Esophagus squamous epithelium (tissue), 5 donors: ENCODE measurements at regions of chr1 and their contacts with region 1.

Region 1: DNA sequence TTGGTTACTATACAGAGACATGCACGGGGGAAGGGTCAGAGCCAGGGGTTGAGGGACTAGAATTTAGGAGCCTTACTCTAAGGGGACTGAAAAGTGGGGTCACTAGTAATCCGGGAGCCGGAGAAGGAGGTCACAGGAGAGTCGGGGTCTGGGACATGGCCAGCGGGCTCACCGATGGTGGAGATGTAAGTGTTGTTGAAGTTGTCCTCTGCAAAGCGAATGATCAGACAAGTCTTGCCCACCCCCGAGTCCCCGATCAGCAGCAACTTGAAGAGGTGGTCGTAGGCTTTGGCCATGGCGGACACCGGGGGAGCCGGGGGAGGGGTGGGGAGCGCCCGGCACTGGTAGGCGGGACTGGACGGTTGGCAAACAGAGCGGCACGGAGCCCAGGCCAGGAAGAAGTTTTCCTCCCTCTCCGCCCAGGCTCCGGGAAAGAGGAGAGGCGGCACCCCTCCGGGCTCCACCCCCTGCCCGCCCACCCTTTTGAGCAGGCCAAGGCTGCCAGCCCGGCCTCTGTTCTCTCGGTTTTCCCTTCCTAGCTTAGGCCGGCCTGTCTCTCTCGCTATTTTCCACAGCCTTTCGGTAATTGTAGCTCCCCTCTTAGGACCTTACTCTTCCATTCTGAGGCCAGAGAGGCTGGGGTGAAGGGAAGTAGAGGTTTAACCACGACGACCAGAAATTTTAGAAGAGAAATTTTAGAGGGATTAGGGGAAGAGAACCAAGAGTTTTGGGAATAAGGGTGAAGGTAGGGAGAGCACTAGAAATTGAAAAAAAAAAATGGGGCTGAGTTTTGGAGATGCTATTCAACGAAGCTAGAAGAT is at the start of gene RAB13:
- DNase-seq: no peak
- H3K4me3 ChIP-seq: peak within 1 kb of the TSS; percentile 58 to 75 (median 68)
- H3K27ac ChIP-seq: peak within 1 kb of the TSS; percentile 83 to 97 (median 86)
- H3K4me1 ChIP-seq: peaks cover 8 to 40% (median 23%) of the 10 kb centered on the region in 3 donors
- H3K27me3 ChIP-seq: no peaks in the 10 kb centered on the region
- CTCF ChIP-seq: no peak
- POLR2A ChIP-seq: peak in 2 of 4 donors; percentile 25 to 56
- total RNA-seq, gene RAB13: 24.1 to 45.8 (median 35.5) TPM

Region 2: GRCh38 chr1:153670859-153671627 is 315.1 kb before region 1 on chr1 and contains the start of gene ILF2:
- intact Hi-C with region 1: loop called (anchors 10 kb)
- DNase-seq: peak; percentile 87
- H3K4me3 ChIP-seq: peak within 1 kb of the TSS; percentile 65 to 87 (median 78)
- H3K27ac ChIP-seq: peak within 1 kb of the TSS; percentile 86 to 93 (median 92)
- H3K4me1 ChIP-seq: peaks cover 9 to 37% (median 12%) of the 10 kb centered on the region in 3 donors
- H3K27me3 ChIP-seq: no peaks in the 10 kb centered on the region
- CTCF ChIP-seq: peak in 1 of 6 experiments; percentile 24
- POLR2A ChIP-seq: peak in 3 of 4 donors; percentile 91 to 99 (median 94)
- total RNA-seq, gene ILF2: 78.0 to 166 (median 130) TPM

Region 3: DNA sequence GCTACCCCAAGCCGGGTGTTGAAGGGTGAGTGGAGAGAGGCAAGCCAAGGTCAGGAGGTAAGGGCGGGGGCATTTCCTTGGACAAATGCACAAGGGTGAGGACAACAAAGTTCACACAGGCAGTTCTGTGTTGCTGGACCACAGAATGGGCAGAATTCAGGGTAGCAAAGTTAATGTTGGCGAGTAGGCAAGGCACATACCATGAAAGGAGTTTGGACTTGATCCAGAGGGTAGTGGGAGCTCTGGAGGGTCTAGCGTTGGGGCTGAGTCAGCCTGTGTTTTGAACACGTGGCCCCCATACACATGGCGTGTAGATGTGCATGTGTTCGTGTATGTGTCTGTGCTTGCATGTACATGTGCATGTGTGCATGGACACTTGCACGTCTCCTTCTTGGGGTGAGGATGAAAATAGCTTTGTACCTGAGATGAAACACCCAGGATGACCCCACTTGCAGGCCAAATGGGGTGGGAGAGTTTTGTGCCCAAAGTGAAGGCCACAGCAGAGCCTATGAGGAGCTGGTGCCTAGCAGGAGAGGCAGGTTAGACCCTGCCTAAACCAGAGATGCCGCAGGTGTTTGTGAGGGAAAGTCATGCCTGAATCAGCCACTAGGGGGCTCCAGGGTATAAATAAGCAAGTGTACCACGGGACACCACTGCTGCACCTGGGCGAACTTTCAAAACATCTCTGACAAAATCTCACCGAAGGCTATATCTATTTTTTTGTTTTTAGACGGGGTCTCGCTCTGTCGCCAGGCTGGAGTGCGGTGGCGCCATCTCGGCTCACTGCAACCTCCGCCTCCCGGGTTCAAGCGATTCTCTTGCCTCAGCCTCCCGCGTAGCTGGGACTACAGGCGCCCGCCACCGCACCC is 189.1 kb before region 1 on chr1:
- intact Hi-C with region 1: loop called (anchors 5 kb)
- DNase-seq: no peak
- H3K4me3 ChIP-seq: no peak overlapping the region
- H3K27ac ChIP-seq: no peak overlapping the region
- H3K4me1 ChIP-seq: peaks cover 0 to 10% (median 0%) of the 10 kb centered on the region in 3 donors
- H3K27me3 ChIP-seq: no peaks in the 10 kb centered on the region
- CTCF ChIP-seq: peak; percentile 89 to 94 (median 92)
- POLR2A ChIP-seq: no peak